Calu3 (cell line): ENCODE measurements at regions of chr12 and their contacts with region 1.

Region 1: DNA sequence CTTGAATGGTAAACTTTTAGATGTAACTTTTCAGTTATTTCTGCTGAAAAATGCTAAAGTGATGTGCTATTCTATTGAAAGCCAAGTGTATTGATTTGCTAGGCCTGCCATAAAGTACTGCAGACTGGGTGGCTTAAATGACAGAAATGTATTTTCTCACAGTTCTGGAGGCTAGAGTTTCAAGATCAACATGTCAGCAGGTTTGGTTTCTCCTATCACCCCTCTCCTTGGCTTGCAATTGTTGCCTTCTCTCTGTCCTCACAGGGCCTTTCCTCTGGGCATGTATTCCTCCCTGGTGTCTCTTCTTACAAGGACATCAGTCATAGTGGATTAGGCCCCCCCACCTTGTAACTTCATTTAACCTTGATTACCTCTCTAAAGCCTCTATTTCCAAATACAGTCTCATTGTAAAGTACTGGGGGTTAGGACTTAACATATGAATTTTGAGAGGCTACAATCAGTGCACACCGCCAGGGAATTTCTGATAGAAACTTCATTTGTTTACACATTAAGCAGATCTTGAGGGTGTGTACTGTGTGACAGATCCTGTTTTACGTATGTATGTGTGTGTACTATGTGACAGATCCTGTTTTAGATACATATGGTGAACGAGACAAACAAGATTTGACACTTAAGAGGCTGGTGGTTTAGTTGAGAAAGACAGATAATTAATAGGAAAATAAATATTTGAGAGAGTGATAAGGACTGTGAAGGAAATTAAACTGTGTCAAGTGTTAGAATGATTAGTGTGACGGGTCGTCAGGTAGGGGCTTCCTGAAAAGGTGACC is 49.5 kb downstream of the ADIPOR2 start:
- DNase-seq: no peak
- H3K4me3 Mint-ChIP-seq: no peak overlapping the region
- H3K27ac Mint-ChIP-seq: peak overlapping the region; percentile 3
- H3K4me1 Mint-ChIP-seq: peaks cover 28% of the 10 kb centered on the region
- H3K27me3 Mint-ChIP-seq: no peaks in the 10 kb centered on the region
- CTCF ChIP-seq: no peak

Region 2: DNA sequence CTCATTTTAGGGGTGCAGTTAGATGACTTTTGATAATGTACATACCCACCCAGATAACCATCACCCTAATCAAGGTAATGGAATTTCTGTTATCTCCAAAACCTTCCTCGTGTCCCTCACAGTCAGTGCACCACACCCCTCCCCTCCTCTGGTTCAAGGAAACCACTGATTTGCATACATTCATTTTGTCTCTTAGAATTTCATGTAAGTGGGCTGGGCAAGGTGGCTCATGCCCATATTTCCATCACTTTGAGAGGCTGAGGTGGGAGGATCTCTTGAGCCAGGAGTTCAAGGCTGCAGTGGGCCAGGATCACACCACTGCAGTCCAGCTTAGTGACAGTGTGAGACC is 33.7 kb before region 1 on chr12:
- CTCF ChIA-PET with region 1: interaction called, 3 read pairs
- intact Hi-C with region 1: loop called (anchors 5 kb)
- DNase-seq: peak; percentile 3
- H3K4me3 Mint-ChIP-seq: no peak overlapping the region
- H3K27ac Mint-ChIP-seq: no peak overlapping the region
- H3K4me1 Mint-ChIP-seq: peaks cover 10% of the 10 kb centered on the region
- H3K27me3 Mint-ChIP-seq: no peaks in the 10 kb centered on the region
- CTCF ChIP-seq: no peak